ENCODE measurements at regions of chr4 and their contacts with region 1.

Region 1: DNA sequence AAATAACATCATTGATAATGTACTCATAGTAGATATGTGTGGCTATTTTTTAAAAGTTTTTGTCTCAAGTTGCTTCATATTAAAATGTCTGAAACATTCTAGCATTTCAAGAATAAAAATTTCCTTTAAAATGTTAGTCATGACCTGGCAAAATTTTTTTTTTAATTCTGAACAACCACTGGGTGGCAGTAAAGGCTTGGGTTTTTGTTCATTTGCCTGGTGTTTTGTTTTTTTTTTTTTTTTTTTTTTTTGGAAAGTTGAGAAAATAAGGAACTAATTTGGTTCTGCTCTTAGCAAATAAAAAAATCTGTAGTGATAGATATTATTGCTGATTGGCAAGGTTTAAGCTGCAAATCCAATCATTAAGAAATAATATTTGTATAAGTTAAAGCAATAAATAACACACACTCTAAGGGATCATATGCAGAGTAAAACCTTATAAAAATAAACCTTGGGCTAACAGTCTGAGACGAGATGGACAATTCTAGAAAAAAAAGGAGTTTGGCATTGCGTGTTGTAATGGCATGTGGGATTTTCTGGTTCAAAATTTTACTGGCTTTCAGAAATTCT is 81.4 kb downstream of the CEP44 start:
- DNase-seq: no peak
- ATAC-seq: no peak
- H3K4me3 ChIP-seq: no peak overlapping the region
- H3K27ac ChIP-seq: no peak overlapping the region
- H3K4me1 ChIP-seq: no peaks in the 10 kb centered on the region
- H3K27me3 ChIP-seq: peaks cover 0 to under 1% (median 0%) of the 10 kb centered on the region in 9 donors
- CTCF ChIP-seq: peak; percentile 30 to 67 (median 48)
- POLR2A ChIP-seq: no peak

Region 2: GRCh38 chr4:174423257-174423944 is 58.3 kb after region 1 on chr4:
- intact Hi-C with region 1: loop called in 1 of 10 experiments (anchors 2 kb)
- DNase-seq: peak in 3 of 5 donors; percentile 18 to 36 (median 19)
- ATAC-seq: peak in 2 of 4 donors; percentile 59 to 69
- H3K4me3 ChIP-seq: no peak overlapping the region
- H3K27ac ChIP-seq: no peak overlapping the region
- H3K4me1 ChIP-seq: peaks cover 0 to 21% (median 5%) of the 10 kb centered on the region in 12 donors
- H3K27me3 ChIP-seq: no peaks in the 10 kb centered on the region
- CTCF ChIP-seq: no peak
- POLR2A ChIP-seq: no peak

Region 3: DNA sequence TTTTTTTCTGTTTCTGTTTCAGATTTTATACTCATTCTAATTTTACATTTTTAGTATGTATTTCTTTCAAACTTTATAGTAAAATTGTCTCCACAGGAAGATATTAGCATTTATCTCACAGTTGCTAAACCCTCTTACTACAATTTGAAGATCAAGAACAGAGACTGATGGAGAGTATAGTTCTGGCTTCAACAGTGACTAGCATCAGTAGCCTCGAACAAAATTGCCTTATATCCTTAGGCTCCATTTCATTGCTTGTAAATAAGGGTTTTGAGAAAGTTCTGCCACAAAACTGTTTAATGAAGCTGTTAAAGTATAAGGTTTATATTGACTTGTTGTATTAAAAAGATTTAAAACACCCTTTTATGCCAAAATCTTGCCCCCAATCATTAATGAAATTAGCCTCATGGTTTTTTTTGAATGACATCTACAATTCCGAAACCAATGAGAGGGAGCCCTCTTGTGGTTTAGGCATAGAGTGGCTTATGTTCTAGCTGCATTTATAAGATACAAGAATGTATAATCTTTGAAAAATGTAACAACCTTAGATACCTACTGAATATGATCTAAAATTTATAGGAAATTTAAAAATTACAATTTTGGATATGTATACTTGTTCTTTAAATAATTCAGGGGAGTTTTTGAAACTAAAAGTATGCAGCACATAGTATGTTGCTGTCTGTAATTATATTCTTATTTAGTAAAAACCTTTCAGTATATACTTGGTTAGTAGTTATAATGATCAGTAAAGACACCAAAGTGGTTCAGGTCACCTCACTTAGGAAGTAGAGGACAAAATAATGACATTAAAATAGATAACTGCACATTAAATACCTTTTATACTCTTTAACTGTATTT is 267.0 kb after region 1 on chr4:
- intact Hi-C with region 1: loop called (anchors 2 to 5 kb)
- DNase-seq: no peak
- ATAC-seq: peak in 1 of 4 donors; percentile 59
- H3K4me3 ChIP-seq: no peak overlapping the region
- H3K27ac ChIP-seq: no peak overlapping the region
- H3K4me1 ChIP-seq: no peaks in the 10 kb centered on the region
- H3K27me3 ChIP-seq: no peaks in the 10 kb centered on the region
- CTCF ChIP-seq: peak; percentile 48 to 75 (median 66)
- POLR2A ChIP-seq: no peak

Region 4: GRCh38 chr4:174714393-174715211 is 349.5 kb after region 1 on chr4:
- intact Hi-C with region 1: loop called in 7 of 10 experiments (anchors 2 to 5 kb)
- DNase-seq: peak in 2 of 5 donors; percentile 18 to 25
- ATAC-seq: peak in 1 of 4 donors; percentile 65
- H3K4me3 ChIP-seq: no peak overlapping the region
- H3K27ac ChIP-seq: no peak overlapping the region
- H3K4me1 ChIP-seq: peaks cover 0 to 6% (median 0%) of the 10 kb centered on the region in 12 donors
- H3K27me3 ChIP-seq: peaks cover 0 to 4% (median 0%) of the 10 kb centered on the region in 9 donors
- CTCF ChIP-seq: peak; percentile 24 to 67 (median 55)
- POLR2A ChIP-seq: no peak

Region 5: GRCh38 chr4:175536852-175537453 is 1171.8 kb after region 1 on chr4:
- intact Hi-C with region 1: loop called in 3 of 10 experiments (anchors 5 to 10 kb)
- DNase-seq: no peak
- ATAC-seq: no peak
- H3K4me3 ChIP-seq: no peak overlapping the region
- H3K27ac ChIP-seq: no peak overlapping the region
- H3K4me1 ChIP-seq: no peaks in the 10 kb centered on the region
- H3K27me3 ChIP-seq: no peaks in the 10 kb centered on the region
- CTCF ChIP-seq: peak; percentile 12 to 64 (median 41)
- POLR2A ChIP-seq: no peak

Measured in heart left ventricle (tissue), 16 donors.